Posterior cingulate gyrus (tissue), 11 donors: ENCODE measurements at regions of chr19 and their contacts with region 1.

Region 1: DNA sequence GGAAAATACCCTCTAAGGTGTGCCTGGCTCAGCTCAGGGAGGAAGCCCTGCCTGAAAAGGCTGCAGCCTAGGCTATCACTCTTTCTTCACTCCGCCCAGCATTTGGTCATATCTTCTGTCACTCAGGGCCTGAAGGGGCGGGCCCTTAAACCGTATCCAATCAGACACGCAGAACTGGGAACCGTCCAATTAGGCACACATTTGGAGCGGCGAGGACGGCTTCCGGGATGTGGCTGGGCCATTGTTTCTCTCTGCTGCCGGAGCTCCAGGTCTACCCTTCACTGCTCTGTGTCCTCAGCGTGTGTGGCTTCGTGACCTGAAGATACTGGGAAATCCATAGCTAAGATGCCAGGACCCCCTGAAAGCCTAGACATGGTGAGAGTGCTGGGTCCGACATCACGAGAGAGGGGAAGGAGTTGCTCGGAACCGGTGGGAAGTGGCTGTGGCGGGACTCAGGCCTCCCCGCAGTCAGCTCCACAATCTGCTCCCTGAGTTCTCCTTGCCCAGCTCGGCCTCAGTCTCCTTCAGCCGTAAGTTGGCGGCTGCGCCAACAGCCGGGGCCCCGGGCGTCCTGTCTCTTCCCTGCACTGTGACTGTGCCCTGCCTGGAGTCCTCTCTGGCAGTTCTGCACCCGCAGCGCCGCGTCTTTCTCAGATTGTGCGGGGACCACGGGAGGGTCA is at the start of gene ZNF493:
- DNase-seq: peak; percentile 87 to 99 (median 94)

Region 2: DNA sequence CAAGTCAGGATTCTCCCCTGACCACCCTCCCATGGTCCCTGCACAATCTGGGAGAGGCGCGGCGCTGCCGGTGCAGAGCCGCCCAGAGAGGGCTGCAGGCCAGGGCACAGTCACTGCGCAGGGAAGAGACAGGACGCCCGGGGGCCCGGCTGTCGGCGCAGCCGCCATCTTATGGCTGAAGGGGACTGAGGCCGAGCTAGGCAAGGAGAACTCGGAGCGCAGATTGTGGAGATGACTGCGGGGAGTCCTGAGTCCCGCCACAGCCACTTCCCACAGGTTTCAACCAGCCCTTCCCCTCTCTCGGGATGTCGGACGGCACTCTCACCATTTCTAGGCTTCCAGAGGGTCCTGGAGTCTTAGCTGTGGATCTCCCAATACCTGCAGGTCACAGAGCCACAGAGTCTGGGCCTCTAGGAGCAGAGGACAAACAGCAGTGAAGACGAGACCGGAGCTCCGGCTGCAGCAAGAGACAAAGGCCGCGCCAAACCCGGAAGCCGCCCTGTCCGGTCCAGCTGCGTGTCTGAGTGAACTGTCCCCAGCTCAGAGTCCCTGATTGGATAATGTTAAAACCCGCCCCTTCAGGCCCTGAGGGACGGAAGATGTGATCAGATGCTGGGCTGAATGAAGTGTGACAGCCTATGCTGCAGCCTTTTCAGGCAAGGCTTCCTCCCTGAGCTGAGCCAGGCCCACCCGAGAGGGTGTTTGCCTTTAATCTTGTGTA is 68.0 kb before region 1 on chr19 and contains the start of gene ZNF708:
- intact Hi-C with region 1: loop called (anchors 2 kb)
- DNase-seq: peak; percentile 88 to 99 (median 91)

Region 3: DNA sequence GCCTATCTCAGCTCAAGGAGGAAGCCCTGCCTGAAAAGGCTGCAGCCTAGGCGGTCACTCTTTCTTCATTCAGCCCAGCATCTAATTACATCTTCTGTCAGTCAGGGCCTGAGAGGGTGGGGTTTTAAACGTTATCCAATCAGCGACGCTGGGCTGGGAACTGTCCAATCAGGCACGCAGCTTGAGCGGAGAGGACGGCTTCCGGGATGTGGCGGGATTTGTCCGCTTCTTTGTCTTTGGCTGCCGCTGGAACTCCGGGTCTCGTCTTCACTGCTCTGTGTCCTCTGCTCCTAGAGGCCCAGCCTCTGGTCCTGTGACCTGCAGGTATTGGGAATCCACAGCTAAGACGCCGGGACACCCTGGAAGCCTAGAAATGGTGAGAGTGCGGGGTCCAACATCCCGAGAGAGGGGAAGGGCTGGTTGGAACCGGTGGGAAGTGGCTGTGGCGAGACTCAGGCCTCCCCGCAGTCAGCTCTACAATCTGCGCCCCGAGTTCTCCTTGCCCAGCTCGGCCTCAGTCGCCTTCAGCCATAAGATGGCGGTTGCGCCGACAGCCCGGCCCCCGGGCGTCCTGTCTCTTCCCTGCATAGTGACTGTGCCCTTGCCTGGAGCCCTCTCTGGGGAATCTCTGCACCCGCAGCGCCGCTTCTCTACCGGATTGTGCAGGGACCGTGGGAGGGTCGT is 38.1 kb before region 1 on chr19 and contains the start of gene ZNF738:
- intact Hi-C with region 1: loop called (anchors 2 kb)
- DNase-seq: peak; percentile 87 to 99 (median 95)